ENCODE measurements at regions of chr6 and their contacts with region 1.

Region 1: DNA sequence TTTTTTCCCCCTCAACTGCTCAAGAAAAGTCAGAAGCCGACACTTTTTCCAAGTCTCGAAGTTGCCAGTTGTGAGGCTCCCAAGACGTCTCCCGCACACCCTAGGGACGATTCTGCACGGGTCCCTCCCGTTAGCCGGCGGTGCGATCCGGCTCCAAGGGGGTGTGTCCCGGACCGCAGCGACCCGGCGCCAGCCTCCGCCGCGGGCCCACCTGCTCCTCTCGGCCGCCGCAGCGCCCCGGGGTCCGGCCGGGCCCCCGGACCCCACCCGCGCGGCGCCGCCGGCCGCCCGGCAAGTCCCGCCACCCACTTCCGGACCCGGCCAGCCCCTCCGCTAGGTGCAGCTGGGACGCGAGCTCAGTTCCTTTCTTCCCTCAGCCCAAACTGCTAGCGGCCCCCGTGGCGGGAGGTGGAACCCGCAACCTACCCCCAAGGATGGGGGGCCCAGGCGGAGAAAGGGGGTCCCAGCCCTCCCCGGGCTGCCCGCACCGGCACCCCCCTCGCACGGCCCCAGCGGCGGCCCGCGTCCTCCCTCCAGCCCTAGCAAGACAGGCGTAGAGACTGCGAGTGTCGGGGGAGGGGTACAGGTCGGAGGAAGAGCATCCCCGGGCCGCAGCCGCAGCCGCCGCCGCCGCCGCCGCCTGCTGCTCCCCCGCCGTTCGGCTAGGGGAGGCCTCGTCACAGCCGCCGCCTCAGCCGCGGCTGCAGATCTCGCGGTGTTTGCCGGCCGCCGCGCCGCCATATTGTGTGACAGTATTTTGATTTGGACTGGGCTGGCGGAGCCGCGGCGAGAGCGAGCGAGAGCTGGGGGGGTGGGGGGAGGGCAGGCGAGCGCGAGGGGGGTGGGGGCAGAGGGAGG is 485 bp upstream of the TAB2 start:
- DNase-seq: peak; percentile 91
- H3K4me3 Mint-ChIP-seq: peak overlapping the region; percentile 81
- H3K27ac Mint-ChIP-seq: peak overlapping the region; percentile 94
- H3K4me1 Mint-ChIP-seq: peaks cover 39% of the 10 kb centered on the region
- H3K27me3 Mint-ChIP-seq: no peaks in the 10 kb centered on the region

Region 2: DNA sequence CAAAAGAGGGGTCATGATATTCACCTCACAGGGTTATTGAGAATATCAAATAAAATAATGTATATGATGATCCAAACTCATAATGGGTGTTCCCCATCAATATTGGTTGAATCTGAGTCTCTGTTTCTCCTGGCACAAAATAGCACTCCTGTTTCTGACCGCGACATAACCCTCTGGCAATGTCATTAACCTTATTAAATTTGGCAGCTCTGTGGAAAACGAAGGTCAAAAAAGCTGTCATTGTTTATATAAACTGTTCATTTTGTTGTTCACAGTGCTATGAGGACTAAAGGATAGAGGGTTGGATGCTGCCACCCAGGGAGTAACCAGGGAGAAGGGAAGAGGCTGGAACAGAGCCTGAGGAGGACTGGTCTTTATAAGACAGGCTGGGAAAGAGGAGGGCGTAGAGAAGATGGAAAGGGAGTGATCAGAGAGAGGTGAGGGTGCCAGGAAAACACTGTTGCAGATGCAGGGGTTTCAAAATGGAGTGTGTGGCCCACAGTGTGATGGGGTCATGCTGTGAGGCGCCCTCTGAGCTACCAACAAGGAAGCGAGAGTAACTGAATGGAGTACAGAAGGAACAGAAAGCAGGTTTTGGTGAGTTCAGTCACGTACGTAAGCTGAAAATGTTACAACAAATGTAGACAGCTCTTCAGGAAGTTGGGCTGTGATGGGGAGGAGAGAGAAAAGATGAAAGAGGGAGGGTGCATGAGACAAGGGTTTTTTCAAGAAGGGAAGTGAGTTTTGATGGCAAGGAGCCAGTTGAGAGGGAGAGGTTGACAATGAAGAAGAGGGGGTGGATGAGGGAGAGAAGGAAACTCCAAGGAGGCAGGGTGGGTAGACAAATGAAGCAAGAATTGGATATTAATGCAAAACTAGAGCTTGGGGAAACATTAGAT is 251.1 kb before region 1 on chr6:
- CTCF ChIA-PET with region 1: no interaction called
- intact Hi-C with region 1: no loop called
- DNase-seq: peak; percentile 66
- H3K4me3 Mint-ChIP-seq: peak overlapping the region; percentile 39
- H3K27ac Mint-ChIP-seq: peak overlapping the region; percentile 93
- H3K4me1 Mint-ChIP-seq: peaks cover 29% of the 10 kb centered on the region
- H3K27me3 Mint-ChIP-seq: no peaks in the 10 kb centered on the region

Region 3: DNA sequence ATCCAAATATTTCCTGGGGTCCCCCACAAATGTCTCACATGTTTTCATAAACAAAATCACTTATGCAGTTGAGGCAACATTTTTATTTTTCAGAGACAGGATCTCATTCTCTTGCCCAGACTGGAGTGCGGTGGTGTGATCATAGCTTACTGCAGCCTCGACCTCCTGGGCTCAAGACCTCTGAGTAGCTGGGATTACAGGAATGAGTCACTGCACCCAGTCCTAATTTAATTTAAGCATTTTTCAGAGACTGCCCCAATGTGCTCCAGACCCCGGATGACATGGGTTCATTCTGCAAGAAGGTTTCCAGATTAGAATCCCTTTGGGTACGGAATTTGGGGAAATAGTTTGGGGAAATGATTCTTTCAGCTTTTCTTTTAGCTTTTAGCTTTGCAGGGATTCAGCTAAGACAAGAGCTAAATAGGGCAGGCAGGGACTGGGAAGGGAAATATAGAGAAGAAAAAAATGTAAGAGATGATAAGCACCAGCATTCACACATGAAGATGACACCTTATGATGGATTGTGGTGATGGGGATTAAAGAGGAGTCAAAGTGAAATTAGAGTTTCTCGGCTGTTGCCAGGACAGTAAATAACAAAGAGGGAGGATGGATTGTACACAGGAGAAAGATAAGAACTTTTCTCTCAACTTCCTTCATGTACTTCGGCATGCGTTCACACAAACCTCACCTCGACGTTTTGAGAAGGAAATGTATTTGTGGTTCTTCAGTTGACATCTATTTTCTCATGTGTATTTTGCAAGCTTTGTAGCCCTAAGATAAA is 168.9 kb before region 1 on chr6:
- CTCF ChIA-PET with region 1: no interaction called
- intact Hi-C with region 1: loop called (anchors 1 kb)
- DNase-seq: peak; percentile 27
- H3K4me3 Mint-ChIP-seq: no peak overlapping the region
- H3K27ac Mint-ChIP-seq: peak overlapping the region; percentile 56
- H3K4me1 Mint-ChIP-seq: peaks cover 58% of the 10 kb centered on the region
- H3K27me3 Mint-ChIP-seq: no peaks in the 10 kb centered on the region

Region 4: DNA sequence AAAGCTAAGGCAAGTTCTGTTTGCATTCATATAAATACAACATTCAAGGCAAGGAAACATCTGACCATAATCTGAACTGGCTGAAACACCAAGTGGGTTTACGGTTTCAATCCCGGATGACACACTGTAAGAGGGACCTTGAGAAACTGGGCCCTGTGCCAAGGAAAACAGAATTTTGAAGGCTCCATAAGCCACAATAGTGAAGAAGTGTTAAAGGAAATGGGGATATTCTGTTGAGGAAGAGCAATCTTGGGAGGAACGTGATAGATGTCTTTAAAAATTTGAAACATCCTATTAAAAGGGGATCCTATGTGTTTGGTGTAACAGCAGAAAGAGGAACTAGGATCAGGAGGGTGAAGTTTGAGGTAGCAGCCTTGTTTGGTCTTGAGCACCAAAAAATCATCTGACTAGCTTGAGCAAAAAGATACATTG is 81.9 kb before region 1 on chr6:
- CTCF ChIA-PET with region 1: no interaction called
- intact Hi-C with region 1: loop called (anchors 1 kb)
- DNase-seq: no peak
- H3K4me3 Mint-ChIP-seq: no peak overlapping the region
- H3K27ac Mint-ChIP-seq: peak overlapping the region; percentile 95
- H3K4me1 Mint-ChIP-seq: peaks cover 49% of the 10 kb centered on the region
- H3K27me3 Mint-ChIP-seq: no peaks in the 10 kb centered on the region

Region 5: GRCh38 chr6:149335924-149336608 is 19.0 kb after region 1 on chr6:
- CTCF ChIA-PET with region 1: interaction called, 4 read pairs
- intact Hi-C with region 1: loop called (anchors 1 kb)
- DNase-seq: peak; percentile 84
- H3K4me3 Mint-ChIP-seq: peak overlapping the region; percentile 59
- H3K27ac Mint-ChIP-seq: peak overlapping the region; percentile 97
- H3K4me1 Mint-ChIP-seq: peaks cover 82% of the 10 kb centered on the region
- H3K27me3 Mint-ChIP-seq: no peaks in the 10 kb centered on the region

Region 6: DNA sequence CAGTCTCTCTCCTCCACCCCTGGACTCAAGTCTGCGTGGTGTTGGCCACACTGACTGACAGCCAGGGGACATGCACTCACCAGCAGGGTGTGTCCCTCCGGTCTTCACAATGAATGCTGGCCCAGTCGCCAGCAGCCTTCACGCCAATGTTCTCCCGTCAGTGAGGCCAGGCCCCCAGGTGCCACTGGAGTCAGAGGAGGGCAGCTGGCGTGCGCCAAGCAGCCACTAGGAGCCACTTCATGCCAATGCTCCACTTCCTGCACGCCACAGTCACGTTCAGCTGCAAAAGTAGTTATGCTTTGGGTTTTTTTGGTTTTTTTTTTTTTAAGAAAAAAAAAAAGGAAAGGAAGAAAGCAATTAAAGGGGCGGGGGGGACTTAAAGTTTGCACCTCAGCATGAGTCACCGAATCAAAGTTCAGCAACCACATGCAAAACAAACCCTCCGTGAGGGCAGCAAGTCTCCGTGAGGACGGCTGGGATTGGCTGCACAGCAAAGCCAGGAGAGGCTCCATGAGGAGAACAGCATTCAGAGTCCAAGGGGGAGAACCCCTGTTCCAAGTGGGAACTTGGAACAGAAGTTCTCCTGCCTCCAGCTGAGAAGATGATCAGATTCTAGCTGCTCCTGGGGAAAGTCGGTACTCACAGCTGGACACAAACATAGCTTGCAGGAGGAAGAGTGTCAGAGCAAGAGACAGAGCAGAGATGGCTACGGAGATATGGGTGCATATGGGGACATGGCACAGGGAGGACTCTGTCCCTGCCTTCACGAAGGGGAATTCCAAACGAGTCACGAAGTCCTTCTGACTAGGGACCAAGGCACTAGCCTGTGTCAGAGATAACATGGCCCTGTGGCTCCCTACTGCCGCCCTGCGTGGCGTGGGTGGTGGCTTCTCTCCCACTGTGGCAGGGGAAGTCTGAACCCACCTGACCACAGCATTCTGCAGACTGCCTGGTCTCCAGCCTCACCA is 168.0 kb after region 1 on chr6 and contains the start of gene ZC3H12D:
- CTCF ChIA-PET with region 1: no interaction called
- intact Hi-C with region 1: loop called (anchors 1 kb)
- DNase-seq: peak; percentile 92
- H3K4me3 Mint-ChIP-seq: peak within 1 kb of the TSS; percentile 94
- H3K27ac Mint-ChIP-seq: peak within 1 kb of the TSS; percentile 97
- H3K4me1 Mint-ChIP-seq: peaks cover 59% of the 10 kb centered on the region
- H3K27me3 Mint-ChIP-seq: no peaks in the 10 kb centered on the region
- total RNA-seq, gene ZC3H12D: 75.8 to 82.7 TPM

Region 7: DNA sequence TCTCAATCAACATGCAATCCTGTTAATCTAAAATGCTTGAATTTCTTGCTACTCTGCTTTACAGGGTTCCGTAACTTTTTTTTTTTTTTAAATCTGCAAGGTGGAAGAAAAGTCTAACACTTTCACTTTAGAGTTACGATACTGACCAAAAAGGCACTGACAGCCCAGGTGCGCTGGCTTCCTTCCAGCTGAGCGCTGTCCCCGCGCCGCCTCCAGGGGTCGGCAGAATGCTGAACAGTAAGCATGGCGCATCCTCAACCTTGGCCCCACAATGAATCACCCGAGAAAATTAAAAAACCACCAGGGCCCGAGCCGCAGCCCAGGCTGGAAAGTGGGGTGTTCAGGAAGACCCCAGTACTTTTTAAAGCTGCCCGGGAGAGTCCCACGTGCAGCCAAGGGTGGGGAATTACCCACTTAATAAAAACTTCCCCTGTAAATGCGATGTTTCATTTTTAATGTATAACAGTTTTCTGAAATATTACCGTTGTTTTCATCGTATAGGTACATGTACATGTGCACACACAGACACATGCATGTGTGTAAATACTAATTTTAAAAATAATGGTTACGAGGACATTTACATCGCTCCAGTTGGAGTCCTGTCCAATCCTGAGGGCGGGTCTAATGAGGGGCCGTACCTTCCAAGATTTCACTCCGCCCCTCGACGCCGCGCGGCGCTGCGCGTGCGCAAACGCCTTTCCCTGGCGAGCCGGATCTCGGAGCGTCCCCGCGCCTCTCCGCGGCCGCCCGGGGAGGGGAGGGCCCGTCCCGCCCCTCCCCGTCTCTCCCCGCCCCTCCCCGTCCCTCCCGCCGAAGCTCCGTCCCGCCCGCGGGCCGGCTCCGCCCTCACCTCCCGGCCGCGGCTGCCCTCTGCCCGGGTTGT is 248.7 kb after region 1 on chr6 and contains the start of gene GINM1:
- CTCF ChIA-PET with region 1: no interaction called
- intact Hi-C with region 1: loop called (anchors 1 kb)
- DNase-seq: peak; percentile 97
- H3K4me3 Mint-ChIP-seq: peak within 1 kb of the TSS; percentile 92
- H3K27ac Mint-ChIP-seq: peak within 1 kb of the TSS; percentile 89
- H3K4me1 Mint-ChIP-seq: peaks cover 26% of the 10 kb centered on the region
- H3K27me3 Mint-ChIP-seq: no peaks in the 10 kb centered on the region
- total RNA-seq, gene GINM1: 17.6 to 18.4 TPM